ENCODE measurements at regions of chr2 and their contacts with region 1.

Region 1: GRCh38 chr2:182666674-182667314 is 49.3 kb upstream of the DNAJC10 start:
- DNase-seq: no peak
- ATAC-seq: no peak

Region 2: DNA sequence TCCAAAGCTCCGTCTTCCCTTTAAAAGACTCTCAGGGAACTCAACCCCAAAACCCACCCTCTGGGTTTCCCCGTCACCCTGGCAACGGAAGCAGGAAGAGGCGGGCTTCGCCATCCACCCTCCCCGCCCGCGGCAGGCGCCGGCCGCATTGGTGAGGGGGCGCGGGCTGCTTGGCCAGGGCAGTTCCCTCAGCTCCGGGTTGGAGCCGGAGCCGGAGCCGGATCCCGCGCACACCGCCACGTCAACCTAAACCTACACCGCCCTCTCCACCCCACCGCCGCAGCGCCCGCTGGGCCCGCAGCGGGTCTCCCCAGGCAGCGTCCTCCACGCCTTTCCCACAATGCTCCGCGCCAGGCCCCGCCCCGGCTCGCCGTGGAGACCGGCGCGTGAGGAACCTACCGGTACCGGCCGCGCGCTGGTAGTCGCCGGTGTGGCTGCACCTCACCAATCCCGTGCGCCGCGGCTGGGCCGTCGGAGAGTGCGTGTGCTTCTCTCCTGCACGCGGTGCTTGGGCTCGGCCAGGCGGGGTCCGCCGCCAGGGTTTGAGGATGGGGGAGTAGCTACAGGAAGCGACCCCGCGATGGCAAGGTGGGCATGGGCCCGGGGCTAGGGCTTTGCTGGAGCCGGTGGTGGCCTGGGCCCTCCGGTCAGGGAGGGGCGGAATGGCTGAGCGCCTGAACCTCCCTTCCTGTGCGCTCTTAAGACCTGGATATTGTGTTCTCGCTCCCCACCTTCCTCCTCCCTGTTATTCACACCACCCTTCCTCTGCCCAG is 49.3 kb after region 1 on chr2 and contains the start of gene DNAJC10:
- intact Hi-C with region 1: loop called (anchors 5 kb)
- DNase-seq: peak; percentile 94
- ATAC-seq: peak; percentile 98
- total RNA-seq, gene DNAJC10: 50.7 TPM

Measured in Right ventricle myocardium inferior (tissue), 1 donor.